ENCODE measurements at regions of chr3 and their contacts with region 1.

Region 1: GRCh38 chr3:12663936-12664908 is at the start of gene RAF1:
- DNase-seq: peak; percentile 94 to 99 (median 97)
- ATAC-seq: peak; percentile 93
- H3K4me3 ChIP-seq: peak within 1 kb of the TSS; percentile 83 to 93
- H3K4me3 Mint-ChIP-seq: peak within 1 kb of the TSS; percentile 90
- H3K27ac ChIP-seq: peak within 1 kb of the TSS; percentile 96 to 99
- H3K27ac Mint-ChIP-seq: peak within 1 kb of the TSS; percentile 99
- H3K4me1 ChIP-seq: peaks cover 30% of the 10 kb centered on the region
- H3K4me1 Mint-ChIP-seq: peaks cover 34% of the 10 kb centered on the region
- H3K27me3 ChIP-seq: no peaks in the 10 kb centered on the region
- H3K27me3 Mint-ChIP-seq: no peaks in the 10 kb centered on the region
- CTCF ChIP-seq: no peak
- total RNA-seq, gene RAF1: 156 to 159 TPM

Region 2: GRCh38 chr3:11271986-11272904 is 1392.0 kb before region 1 on chr3 and contains the start of gene ATG7:
- CTCF ChIA-PET with region 1: no interaction called
- POLR2A ChIA-PET with region 1: no interaction called
- intact Hi-C with region 1: loop called in 1 of 2 experiments (anchors 5 kb)
- DNase-seq: peak; percentile 94 to 98 (median 97)
- ATAC-seq: peak; percentile 98
- H3K4me3 ChIP-seq: peak within 1 kb of the TSS; percentile 77 to 96
- H3K4me3 Mint-ChIP-seq: peak within 1 kb of the TSS; percentile 96
- H3K27ac ChIP-seq: peak within 1 kb of the TSS; percentile 94 to 97
- H3K27ac Mint-ChIP-seq: peak within 1 kb of the TSS; percentile 99
- H3K4me1 ChIP-seq: peaks cover 23% of the 10 kb centered on the region
- H3K4me1 Mint-ChIP-seq: peaks cover 52% of the 10 kb centered on the region
- H3K27me3 ChIP-seq: no peaks in the 10 kb centered on the region
- H3K27me3 Mint-ChIP-seq: no peaks in the 10 kb centered on the region
- CTCF ChIP-seq: no peak
- total RNA-seq, gene ATG7: 21.3 to 23.8 TPM

Region 3: DNA sequence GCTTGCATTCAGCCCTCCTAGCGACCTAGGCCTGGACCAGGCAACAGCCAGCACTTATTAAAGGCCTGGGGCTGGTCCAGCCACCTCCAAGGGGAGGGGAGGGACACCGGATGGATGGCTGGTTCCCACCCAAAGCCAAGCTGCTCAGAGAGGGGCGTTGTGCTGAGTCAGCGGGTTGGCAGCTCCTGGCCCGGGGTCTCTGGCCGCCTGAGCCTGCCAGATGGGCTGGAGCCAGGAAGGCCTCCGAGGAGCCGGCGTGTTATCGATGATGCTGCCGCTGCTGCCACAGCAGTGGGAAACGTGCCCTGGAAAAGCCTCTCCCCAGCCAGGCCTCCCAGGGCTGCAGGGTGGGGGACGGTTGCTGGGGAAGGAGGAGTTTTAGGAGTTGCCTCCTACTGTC is 223.3 kb before region 1 on chr3:
- CTCF ChIA-PET with region 1: no interaction called
- POLR2A ChIA-PET with region 1: no interaction called
- intact Hi-C with region 1: no loop called
- DNase-seq: no peak
- ATAC-seq: no peak
- H3K4me3 ChIP-seq: no peak overlapping the region
- H3K4me3 Mint-ChIP-seq: no peak overlapping the region
- H3K27ac ChIP-seq: no peak overlapping the region
- H3K27ac Mint-ChIP-seq: no peak overlapping the region
- H3K4me1 ChIP-seq: no peaks in the 10 kb centered on the region
- H3K4me1 Mint-ChIP-seq: no peaks in the 10 kb centered on the region
- H3K27me3 ChIP-seq: no peaks in the 10 kb centered on the region
- H3K27me3 Mint-ChIP-seq: peaks cover 16% of the 10 kb centered on the region
- CTCF ChIP-seq: no peak

Region 4: GRCh38 chr3:12508291-12508700 is 155.9 kb before region 1 on chr3:
- CTCF ChIA-PET with region 1: no interaction called
- POLR2A ChIA-PET with region 1: no interaction called
- intact Hi-C with region 1: no loop called
- DNase-seq: no peak
- ATAC-seq: no peak
- H3K4me3 ChIP-seq: no peak overlapping the region
- H3K4me3 Mint-ChIP-seq: no peak overlapping the region
- H3K27ac ChIP-seq: no peak overlapping the region
- H3K27ac Mint-ChIP-seq: peak overlapping the region; percentile 37
- H3K4me1 ChIP-seq: no peaks in the 10 kb centered on the region
- H3K4me1 Mint-ChIP-seq: no peaks in the 10 kb centered on the region
- H3K27me3 ChIP-seq: no peaks in the 10 kb centered on the region
- H3K27me3 Mint-ChIP-seq: no peaks in the 10 kb centered on the region
- CTCF ChIP-seq: no peak

Region 5: DNA sequence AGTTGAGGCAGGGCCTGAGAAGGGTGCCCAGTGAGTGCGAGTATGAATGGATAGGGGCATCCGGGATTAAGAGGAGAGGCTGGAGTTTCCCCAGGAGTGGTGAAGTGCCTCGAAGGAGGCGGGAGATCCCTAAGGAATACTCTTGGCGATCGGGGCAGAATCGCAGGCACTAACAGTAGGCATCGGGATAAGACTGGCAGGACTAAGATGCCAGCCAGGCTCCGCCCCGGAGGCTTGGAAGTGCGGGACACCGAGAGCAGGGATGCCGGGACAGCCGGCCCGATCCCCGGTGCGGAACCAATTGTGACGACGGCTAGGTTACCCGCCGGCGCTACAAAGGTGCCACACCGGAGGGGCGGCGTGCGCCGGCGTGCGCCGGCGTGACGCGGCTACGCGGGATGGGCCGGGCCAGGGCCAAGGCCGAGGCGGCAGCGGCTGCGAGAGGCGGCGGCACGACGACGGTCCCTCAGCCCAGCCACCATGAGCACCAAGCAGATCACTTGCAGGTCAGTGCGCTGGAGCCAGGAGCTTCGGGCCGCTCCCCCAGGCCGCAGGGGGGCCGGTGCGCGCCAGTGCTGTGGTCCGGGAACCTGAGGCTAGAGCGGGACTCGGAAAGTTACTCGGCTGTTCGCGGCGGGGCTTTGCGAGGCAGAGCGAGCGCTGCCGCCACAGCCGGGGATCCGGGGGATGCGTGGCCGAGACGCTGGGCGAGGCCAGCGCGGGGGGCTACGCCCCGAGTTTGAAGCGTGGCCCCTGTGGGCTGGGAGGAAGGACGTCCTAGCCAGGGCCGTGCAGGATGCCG is 107.3 kb before region 1 on chr3 and contains the start of gene MKRN2:
- CTCF ChIA-PET with region 1: interaction called, 4 read pairs
- POLR2A ChIA-PET with region 1: interaction called, 15 read pairs
- intact Hi-C with region 1: loop called (anchors 1 kb)
- DNase-seq: peak; percentile 67 to 94 (median 83)
- ATAC-seq: peak; percentile 93
- H3K4me3 ChIP-seq: peak within 1 kb of the TSS; percentile 73 to 86
- H3K4me3 Mint-ChIP-seq: peak within 1 kb of the TSS; percentile 89
- H3K27ac ChIP-seq: peak within 1 kb of the TSS; percentile 86 to 92
- H3K27ac Mint-ChIP-seq: peak within 1 kb of the TSS; percentile 90
- H3K4me1 ChIP-seq: peaks cover 49% of the 10 kb centered on the region
- H3K4me1 Mint-ChIP-seq: peaks cover 60% of the 10 kb centered on the region
- H3K27me3 ChIP-seq: peaks cover 6 to 16% of the 10 kb centered on the region in 2 experiments
- H3K27me3 Mint-ChIP-seq: peaks cover 24% of the 10 kb centered on the region
- CTCF ChIP-seq: no peak
- total RNA-seq, gene MKRN2: 24.8 to 25.5 TPM

Region 6: GRCh38 chr3:12613250-12613649 is 51.0 kb before region 1 on chr3:
- CTCF ChIA-PET with region 1: no interaction called
- POLR2A ChIA-PET with region 1: interaction called, 4 read pairs
- intact Hi-C with region 1: loop called (anchors 5 kb)
- DNase-seq: peak in 4 of 9 experiments; percentile 3 to 37 (median 21)
- ATAC-seq: peak; percentile 88
- H3K4me3 ChIP-seq: no peak overlapping the region
- H3K4me3 Mint-ChIP-seq: no peak overlapping the region
- H3K27ac ChIP-seq: peak overlapping the region in 1 of 2 experiments; percentile 38
- H3K27ac Mint-ChIP-seq: peak overlapping the region; percentile 79
- H3K4me1 ChIP-seq: peaks cover 14% of the 10 kb centered on the region
- H3K4me1 Mint-ChIP-seq: peaks cover 36% of the 10 kb centered on the region
- H3K27me3 ChIP-seq: no peaks in the 10 kb centered on the region
- H3K27me3 Mint-ChIP-seq: no peaks in the 10 kb centered on the region
- CTCF ChIP-seq: no peak

Region 7: DNA sequence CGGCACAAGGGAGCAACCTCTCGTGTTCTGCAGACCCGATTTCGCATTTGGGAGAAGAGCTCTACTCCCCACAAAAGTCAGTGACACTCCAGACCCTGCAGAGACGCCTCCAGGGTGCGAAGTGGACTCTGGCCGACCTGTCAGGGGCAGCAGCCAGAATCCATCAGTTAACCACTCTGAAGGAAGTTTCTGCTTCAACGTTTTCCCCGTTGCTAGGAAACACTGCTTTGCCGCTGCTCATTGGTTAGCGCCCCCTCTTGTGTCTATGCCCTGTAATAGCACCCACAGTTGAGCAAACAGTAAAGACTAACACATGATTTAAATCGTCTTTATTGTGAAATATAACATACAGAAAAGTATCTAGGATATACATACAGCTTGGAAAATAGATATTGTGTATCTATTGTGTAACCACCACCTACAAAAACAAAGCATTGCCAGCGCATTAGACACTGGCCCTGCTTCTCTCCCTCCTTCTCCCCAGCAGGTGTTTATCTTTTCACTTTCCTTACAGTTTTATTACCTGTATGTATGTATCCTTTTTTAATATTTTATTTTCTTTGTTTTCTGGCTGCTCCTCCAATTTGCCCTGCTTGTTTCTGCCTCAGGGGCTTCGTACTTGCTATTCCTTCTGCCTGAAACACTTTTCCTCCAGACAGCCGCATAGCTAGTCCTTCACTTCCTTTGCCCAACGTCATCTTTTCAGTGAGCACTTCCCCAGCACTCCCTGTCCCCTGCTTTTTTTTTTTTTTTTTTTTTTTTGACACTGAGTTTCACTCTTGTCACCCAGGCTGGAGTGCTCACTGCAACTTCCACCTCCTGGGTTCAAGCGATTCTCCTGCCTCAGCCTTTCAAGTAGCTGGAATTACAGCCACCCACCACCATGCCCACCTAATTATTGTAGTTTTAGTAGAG is 56.0 kb after region 1 on chr3:
- CTCF ChIA-PET with region 1: no interaction called
- POLR2A ChIA-PET with region 1: no interaction called
- intact Hi-C with region 1: loop called in 1 of 2 experiments (anchors 2 kb)
- DNase-seq: peak; percentile 46 to 89 (median 71)
- ATAC-seq: peak; percentile 99
- H3K4me3 ChIP-seq: no peak overlapping the region
- H3K4me3 Mint-ChIP-seq: peak overlapping the region; percentile 69
- H3K27ac ChIP-seq: no peak overlapping the region
- H3K27ac Mint-ChIP-seq: no peak overlapping the region
- H3K4me1 ChIP-seq: peaks cover 4% of the 10 kb centered on the region
- H3K4me1 Mint-ChIP-seq: peaks cover 10% of the 10 kb centered on the region
- H3K27me3 ChIP-seq: peaks cover 0 to 3% of the 10 kb centered on the region in 2 experiments
- H3K27me3 Mint-ChIP-seq: no peaks in the 10 kb centered on the region
- CTCF ChIP-seq: peak; percentile 84

Region 8: GRCh38 chr3:12841149-12841970 is 177.1 kb after region 1 on chr3 and contains the start of gene RPL32:
- CTCF ChIA-PET with region 1: no interaction called
- POLR2A ChIA-PET with region 1: interaction called, 8 read pairs
- intact Hi-C with region 1: loop called in 1 of 2 experiments (anchors 1 kb)
- DNase-seq: peak; percentile 72 to 97 (median 84)
- ATAC-seq: peak; percentile 91
- H3K4me3 ChIP-seq: peak within 1 kb of the TSS; percentile 86 to 98
- H3K4me3 Mint-ChIP-seq: peak within 1 kb of the TSS; percentile 98
- H3K27ac ChIP-seq: peak within 1 kb of the TSS; percentile 93 to 95
- H3K27ac Mint-ChIP-seq: peak within 1 kb of the TSS; percentile 99
- H3K4me1 ChIP-seq: peaks cover 29% of the 10 kb centered on the region
- H3K4me1 Mint-ChIP-seq: peaks cover 48% of the 10 kb centered on the region
- H3K27me3 ChIP-seq: no peaks in the 10 kb centered on the region
- H3K27me3 Mint-ChIP-seq: no peaks in the 10 kb centered on the region
- CTCF ChIP-seq: peak; percentile 68
- total RNA-seq, gene RPL32: 4,188 to 4,224 TPM